ENCODE measurements at regions of chr7 and their contacts with region 1.

Region 1: GRCh38 chr7:89622838-89623672 is 531.2 kb upstream of the STEAP1 start:
- DNase-seq: peak; percentile 34 to 45
- H3K4me3 ChIP-seq: no peak overlapping the region
- H3K4me3 Mint-ChIP-seq: no peak overlapping the region
- H3K27ac Mint-ChIP-seq: no peak overlapping the region
- H3K4me1 ChIP-seq: no peaks in the 10 kb centered on the region
- H3K4me1 Mint-ChIP-seq: no peaks in the 10 kb centered on the region
- H3K27me3 ChIP-seq: no peaks in the 10 kb centered on the region
- H3K27me3 Mint-ChIP-seq: peaks cover 7% of the 10 kb centered on the region
- CTCF ChIP-seq: peak; percentile 61 to 78

Region 2: DNA sequence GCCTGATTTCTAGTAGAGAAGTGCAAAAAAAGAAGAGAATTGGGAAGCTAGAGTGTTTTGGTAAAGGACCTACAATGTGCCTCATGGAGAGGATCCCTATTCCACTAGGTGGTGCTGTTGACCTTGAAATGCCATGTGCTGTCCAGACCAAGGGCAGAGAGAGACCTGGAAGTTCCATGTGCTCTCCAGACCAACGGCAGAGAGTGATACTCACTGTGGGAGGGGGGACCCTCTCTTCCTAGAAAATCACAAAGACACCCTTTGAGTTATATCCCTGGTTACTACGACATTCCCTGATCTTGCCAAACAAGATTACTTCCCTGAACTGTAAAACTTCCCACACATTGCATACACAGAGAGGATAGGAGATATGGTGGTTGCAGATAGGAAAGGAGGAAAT is 1076.2 kb before region 1 on chr7:
- CTCF ChIA-PET with region 1: interaction called, 3 read pairs
- POLR2A ChIA-PET with region 1: no interaction called
- intact Hi-C with region 1: loop called (anchors 10 kb)
- DNase-seq: peak in 1 of 2 experiments; percentile 62
- H3K4me3 ChIP-seq: no peak overlapping the region
- H3K4me3 Mint-ChIP-seq: no peak overlapping the region
- H3K27ac Mint-ChIP-seq: no peak overlapping the region
- H3K4me1 ChIP-seq: no peaks in the 10 kb centered on the region
- H3K4me1 Mint-ChIP-seq: no peaks in the 10 kb centered on the region
- H3K27me3 ChIP-seq: no peaks in the 10 kb centered on the region
- H3K27me3 Mint-ChIP-seq: no peaks in the 10 kb centered on the region
- CTCF ChIP-seq: peak; percentile 33 to 45

Region 3: DNA sequence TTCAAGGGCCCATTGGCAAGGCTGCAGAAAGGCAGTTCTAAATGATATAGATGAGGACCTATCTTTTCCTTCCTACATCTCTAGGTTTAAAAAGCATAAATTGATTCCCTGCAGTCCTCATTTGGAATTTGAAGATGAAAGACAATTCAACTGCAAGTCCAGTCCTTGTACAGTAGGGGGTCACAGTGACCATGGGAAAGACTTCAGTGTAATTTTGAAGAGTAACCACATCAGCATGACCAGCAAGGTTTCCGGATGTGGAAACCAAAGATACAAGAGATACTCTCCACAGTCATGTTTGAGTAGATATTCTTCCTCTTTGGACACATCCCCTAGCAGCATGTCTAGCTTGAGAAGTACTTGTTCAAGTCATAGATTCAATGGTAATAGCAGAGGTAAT is 288.3 kb before region 1 on chr7:
- CTCF ChIA-PET with region 1: no interaction called
- POLR2A ChIA-PET with region 1: no interaction called
- intact Hi-C with region 1: loop called (anchors 1 kb)
- DNase-seq: peak in 1 of 2 experiments; percentile 15
- H3K4me3 ChIP-seq: no peak overlapping the region
- H3K4me3 Mint-ChIP-seq: no peak overlapping the region
- H3K27ac Mint-ChIP-seq: no peak overlapping the region
- H3K4me1 ChIP-seq: no peaks in the 10 kb centered on the region
- H3K4me1 Mint-ChIP-seq: no peaks in the 10 kb centered on the region
- H3K27me3 ChIP-seq: no peaks in the 10 kb centered on the region
- H3K27me3 Mint-ChIP-seq: peaks cover 10% of the 10 kb centered on the region
- CTCF ChIP-seq: peak; percentile 27 to 48

Measured in Caco-2 (cell line).